Activated CD4-positive, alpha-beta T cell treated with anti-CD3 and anti-CD28 coated beads, Interleukin-2, amount 10 ng/mL, durations not matched to agents 24 days and 14 days (primary cell): ENCODE measurements at regions of chr6 and their contacts with region 1.

Region 1: DNA sequence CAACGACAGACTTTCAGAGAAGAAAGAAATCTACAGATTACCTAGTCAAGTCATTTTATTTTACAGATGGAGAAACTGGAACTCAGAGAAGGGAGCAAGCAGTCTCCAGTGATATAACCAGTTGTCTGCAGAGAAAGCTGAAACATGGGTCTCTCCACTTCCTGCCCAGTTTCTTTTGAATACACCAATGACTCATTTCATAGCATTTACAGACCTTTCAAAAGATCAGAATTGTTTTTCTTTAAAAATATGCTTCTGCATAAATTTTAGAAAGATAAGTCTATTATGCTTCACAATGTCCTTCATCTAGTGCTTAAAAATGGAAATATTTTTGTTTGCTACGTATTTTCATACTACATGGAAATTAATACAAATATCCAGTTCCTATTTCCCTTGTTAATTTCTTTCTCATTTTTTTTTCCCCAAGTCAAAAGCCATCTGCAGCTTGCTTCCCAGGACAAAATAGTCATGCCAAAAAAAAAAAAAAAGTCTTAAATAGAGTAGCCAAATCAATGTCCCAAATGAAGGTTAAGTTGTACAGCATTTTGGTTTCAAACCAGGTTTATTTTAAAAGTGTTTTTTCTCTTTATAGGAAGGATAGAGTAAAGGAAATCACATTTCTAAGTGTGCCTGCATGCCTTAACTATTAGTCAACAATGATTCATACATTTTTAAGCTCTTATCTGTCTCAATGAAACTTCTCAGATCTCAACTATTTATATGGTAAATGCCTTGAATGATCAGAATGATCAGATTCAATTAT is 36.9 kb downstream of the ARHGAP18 start:
- DNase-seq: peak; percentile 76
- H3K4me3 Mint-ChIP-seq: peak overlapping the region; percentile 79
- H3K27ac Mint-ChIP-seq: peak overlapping the region; percentile 90
- H3K4me1 Mint-ChIP-seq: peaks cover 49% of the 10 kb centered on the region
- H3K27me3 Mint-ChIP-seq: no peaks in the 10 kb centered on the region

Region 2: DNA sequence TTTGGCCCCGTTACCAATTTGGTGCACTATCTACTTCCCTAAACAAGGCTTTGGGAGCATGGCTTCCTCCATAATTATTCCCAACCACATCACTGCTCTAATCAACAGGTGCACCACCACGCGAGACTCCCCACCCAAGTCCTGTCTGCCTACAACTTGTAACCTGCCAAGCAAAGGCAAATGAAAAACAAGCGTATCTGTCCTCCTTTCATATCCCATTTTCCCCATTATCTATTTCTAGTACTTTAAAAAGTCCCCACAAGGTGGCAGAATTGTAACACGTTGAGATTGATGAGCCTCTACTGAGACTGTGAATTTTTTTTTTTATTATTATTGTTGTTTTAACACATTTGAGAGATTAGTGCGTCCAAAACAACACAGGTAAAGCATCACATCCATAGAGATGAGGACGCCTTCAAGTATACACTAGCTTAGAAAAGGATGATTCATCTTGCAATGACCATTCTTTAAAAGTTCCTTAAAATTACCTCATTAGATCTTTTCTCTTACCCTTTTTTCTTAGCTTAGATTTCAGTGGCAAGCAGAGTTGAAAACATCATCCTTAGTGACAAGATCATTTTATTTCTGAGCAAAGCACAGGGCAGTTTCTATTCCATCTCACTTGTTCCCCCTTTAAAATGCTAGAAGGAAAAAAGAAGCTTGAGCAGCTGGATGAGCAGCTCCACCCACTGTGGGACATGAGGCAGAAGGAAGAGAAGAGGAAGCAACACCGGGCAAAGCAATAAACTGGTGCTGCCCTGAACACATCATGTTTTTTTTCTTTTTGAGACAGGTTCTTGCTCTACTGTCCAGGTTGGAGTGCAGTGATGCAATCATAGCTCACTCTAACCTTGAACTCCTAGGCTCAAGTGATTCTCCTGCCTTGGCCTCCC is 173.9 kb before region 1 on chr6:
- intact Hi-C with region 1: loop called (anchors 2 kb)
- DNase-seq: peak; percentile 80
- H3K4me3 Mint-ChIP-seq: peak overlapping the region; percentile 39
- H3K27ac Mint-ChIP-seq: peak overlapping the region; percentile 43
- H3K4me1 Mint-ChIP-seq: peaks cover 58% of the 10 kb centered on the region
- H3K27me3 Mint-ChIP-seq: no peaks in the 10 kb centered on the region

Region 3: DNA sequence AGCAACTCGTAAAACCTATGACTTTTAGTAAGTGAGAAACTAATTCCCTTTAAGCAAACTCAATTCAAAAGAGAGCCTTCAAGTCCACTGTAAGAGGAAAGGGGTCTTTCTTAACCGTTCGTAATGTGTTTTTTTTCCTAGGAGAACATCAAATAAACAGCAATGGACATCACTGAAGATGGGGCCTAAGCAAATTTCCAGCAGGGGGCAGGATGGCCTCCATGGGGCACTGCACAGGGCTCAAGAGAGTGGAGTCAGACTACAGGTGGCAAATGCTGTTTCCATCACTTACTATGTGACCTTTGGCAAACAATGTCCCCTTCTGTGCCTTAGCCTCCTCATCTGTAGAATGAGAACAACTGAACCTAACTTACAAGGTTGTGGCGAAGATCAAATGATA is 51.8 kb before region 1 on chr6:
- intact Hi-C with region 1: loop called (anchors 10 kb)
- DNase-seq: peak; percentile 76
- H3K4me3 Mint-ChIP-seq: no peak overlapping the region
- H3K27ac Mint-ChIP-seq: no peak overlapping the region
- H3K4me1 Mint-ChIP-seq: peaks cover 3% of the 10 kb centered on the region
- H3K27me3 Mint-ChIP-seq: no peaks in the 10 kb centered on the region

Region 4: DNA sequence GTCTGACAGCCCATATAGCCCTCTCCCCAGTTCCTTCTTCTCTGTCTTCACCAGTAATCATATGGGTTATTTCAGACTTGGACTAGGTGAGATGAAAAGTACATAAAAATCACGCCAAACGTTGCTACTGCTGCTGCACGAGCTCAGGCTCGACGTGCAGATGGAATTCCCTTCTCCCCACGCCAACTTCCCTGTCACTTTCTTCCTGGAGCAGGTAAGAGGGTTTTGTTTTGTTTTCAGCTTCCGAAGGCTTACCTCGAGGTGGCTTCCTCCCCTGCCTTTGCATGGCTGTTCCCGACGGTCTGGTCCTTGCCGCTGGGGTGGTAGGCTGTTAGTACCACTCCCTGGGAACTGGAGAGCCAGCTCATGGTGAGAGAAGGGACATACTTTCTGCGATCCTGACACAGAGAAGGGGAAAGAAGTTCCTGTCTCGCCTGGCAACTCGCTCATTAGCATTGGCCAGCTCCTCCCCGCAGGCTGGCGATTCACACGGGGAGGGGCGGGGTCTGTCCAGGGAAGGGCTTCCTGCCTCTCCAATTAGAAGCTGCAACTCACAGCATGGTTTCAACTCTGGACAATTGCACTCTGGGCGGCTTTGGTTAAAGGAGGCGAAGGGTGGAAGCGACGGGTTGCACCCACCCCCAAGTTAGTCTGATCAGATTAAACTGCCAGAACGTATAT is 36.8 kb after region 1 on chr6 and contains the start of gene ARHGAP18:
- intact Hi-C with region 1: loop called (anchors 1 kb)
- DNase-seq: peak; percentile 93
- H3K4me3 Mint-ChIP-seq: peak within 1 kb of the TSS; percentile 99
- H3K27ac Mint-ChIP-seq: peak within 1 kb of the TSS; percentile 91
- H3K4me1 Mint-ChIP-seq: peaks cover 46% of the 10 kb centered on the region
- H3K27me3 Mint-ChIP-seq: peaks cover 3% of the 10 kb centered on the region
- total RNA-seq, gene ARHGAP18: 3.2 and 3.8 TPM in 2 replicates

Region 5: DNA sequence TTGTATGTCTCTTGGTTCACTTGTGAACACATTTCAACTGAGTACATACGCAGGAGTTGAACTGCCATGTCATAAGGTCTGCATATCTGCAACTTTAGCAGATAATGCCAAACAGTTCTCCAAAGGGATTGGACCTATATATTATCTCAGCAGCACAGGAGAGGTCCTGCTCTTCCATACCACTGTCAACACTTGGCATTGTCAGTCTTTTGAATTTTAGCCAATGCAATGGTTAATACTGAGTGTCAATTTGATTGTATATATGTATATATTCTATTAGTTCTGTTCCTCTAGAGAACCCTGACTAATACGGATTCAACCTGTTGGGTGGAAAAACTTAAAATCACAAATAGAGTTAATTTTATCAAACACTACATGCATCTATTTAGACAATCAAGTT is 63.0 kb after region 1 on chr6:
- intact Hi-C with region 1: no loop called
- DNase-seq: peak; percentile 4
- H3K4me3 Mint-ChIP-seq: no peak overlapping the region
- H3K27ac Mint-ChIP-seq: no peak overlapping the region
- H3K4me1 Mint-ChIP-seq: peaks cover 5% of the 10 kb centered on the region
- H3K27me3 Mint-ChIP-seq: peaks cover 2% of the 10 kb centered on the region

Region 6: GRCh38 chr6:129748212-129748900 is 75.3 kb after region 1 on chr6:
- intact Hi-C with region 1: loop called (anchors 1 kb)
- DNase-seq: peak; percentile 86
- H3K4me3 Mint-ChIP-seq: peak overlapping the region; percentile 66
- H3K27ac Mint-ChIP-seq: peak overlapping the region; percentile 79
- H3K4me1 Mint-ChIP-seq: peaks cover 47% of the 10 kb centered on the region
- H3K27me3 Mint-ChIP-seq: no peaks in the 10 kb centered on the region

Region 7: DNA sequence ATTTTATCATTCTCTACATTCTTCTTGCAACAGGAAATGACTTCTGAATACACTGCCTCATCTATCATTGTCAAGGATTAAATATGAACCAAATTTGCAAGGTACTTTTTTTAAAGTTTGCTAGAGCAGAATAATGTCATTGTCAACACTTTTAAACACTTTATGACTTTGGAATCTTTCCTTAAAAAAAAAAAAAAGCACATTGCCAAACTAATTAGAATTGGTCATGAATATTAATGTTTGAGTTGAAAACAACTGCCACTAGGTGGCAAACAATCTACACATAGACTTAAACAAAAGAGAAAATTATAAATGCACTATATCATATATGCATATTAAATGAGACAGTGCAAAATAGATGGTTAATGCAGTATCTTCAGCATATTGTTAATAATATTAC is 220.6 kb after region 1 on chr6:
- intact Hi-C with region 1: no loop called
- DNase-seq: no peak
- H3K4me3 Mint-ChIP-seq: no peak overlapping the region
- H3K27ac Mint-ChIP-seq: no peak overlapping the region
- H3K4me1 Mint-ChIP-seq: peaks cover 5% of the 10 kb centered on the region
- H3K27me3 Mint-ChIP-seq: peaks cover 3% of the 10 kb centered on the region

Region 8: DNA sequence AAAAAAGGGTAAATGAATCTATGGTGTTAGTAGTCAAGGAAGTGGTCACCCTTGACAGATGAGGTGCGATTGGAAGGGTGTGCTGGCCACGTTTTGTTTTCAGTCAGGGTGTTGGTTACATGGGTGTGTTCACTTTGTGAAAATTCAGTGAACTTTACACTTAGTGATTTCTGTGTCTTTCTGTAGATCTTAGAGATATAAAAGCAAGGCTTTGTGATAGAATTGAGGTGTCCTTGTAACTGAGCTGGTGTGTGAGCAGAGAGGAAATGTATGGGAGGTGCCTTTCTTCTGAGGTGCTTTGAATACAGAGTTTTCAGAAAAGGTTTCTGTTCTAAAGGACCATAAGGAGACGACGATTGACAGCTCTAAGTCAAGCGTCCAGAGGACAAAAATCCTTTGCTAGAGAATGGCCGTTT is 459.2 kb after region 1 on chr6:
- intact Hi-C with region 1: loop called (anchors 10 kb)
- DNase-seq: peak; percentile 92
- H3K4me3 Mint-ChIP-seq: peak overlapping the region; percentile 66
- H3K27ac Mint-ChIP-seq: peak overlapping the region; percentile 93
- H3K4me1 Mint-ChIP-seq: peaks cover 62% of the 10 kb centered on the region
- H3K27me3 Mint-ChIP-seq: no peaks in the 10 kb centered on the region